ENCODE measurements at regions of chr9 and their contacts with region 1.

Region 1: GRCh38 chr9:78261403-78262001 is 25.6 kb downstream of the CEP78 start:
- DNase-seq: no peak
- ATAC-seq: peak; percentile 70 to 81 (median 78)
- H3K4me3 ChIP-seq: no peak overlapping the region
- H3K27ac ChIP-seq: no peak overlapping the region
- H3K4me1 ChIP-seq: peaks cover 5 to 15% (median 12%) of the 10 kb centered on the region in 3 donors
- H3K27me3 ChIP-seq: no peaks in the 10 kb centered on the region
- CTCF ChIP-seq: peak; percentile 27 to 59 (median 46)

Region 2: DNA sequence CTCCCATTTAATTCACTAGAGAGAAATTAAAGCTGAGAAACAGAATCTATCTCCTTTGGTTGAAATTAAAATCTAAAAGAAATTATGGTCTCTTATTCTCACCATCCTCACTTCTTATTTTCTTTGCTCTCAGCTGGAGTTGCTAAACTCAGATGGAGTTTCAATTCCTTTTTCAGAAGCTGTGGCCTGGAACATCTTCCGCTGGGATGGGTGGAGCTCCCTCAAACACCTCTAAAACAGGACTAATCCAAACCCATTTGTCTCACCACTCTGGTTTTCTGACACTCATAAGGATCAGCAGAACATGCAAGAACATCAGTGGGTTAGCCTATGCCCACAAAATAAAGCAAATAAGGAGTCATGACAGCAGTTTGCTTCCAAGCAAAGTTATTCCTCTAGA is 65.2 kb before region 1 on chr9:
- intact Hi-C with region 1: no loop called
- DNase-seq: no peak
- ATAC-seq: no peak
- H3K4me3 ChIP-seq: no peak overlapping the region
- H3K27ac ChIP-seq: no peak overlapping the region
- H3K4me1 ChIP-seq: no peaks in the 10 kb centered on the region
- H3K27me3 ChIP-seq: no peaks in the 10 kb centered on the region
- CTCF ChIP-seq: no peak

Region 3: DNA sequence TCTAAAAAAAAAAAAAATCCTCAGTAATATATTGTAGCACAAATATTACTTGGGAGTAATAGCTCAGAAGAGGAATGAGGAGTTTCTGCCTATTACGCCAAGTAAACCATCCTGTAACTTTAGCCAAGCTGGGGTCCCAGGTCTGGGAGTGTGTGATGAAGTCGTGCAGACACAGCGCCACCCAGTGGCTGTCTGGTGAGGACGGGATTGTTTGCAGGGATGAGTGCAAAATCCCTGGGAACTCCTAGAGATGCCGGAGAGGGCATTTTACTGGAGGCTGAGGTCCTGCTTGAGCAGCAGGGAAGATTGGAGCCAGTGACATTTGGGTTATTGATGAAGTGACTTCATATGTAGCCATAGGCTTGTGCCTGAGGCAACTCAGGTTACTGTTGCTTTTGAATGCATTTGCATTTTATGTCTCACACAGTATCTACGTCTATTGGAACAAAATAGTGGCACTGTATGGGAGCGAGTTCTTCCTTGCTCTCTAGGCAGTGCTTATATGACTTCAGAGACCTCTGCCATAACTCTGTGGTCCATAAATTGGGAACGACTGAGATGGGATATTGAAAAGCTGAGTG is 108.2 kb after region 1 on chr9:
- intact Hi-C with region 1: loop called in 2 of 3 experiments (anchors 5 to 10 kb)
- DNase-seq: peak; percentile 47 to 90 (median 70)
- ATAC-seq: peak; percentile 77 to 96 (median 90)
- H3K4me3 ChIP-seq: no peak overlapping the region
- H3K27ac ChIP-seq: no peak overlapping the region
- H3K4me1 ChIP-seq: no peaks in the 10 kb centered on the region
- H3K27me3 ChIP-seq: no peaks in the 10 kb centered on the region
- CTCF ChIP-seq: peak; percentile 74 to 83 (median 78)

Region 4: GRCh38 chr9:78383130-78383529 is 121.6 kb after region 1 on chr9:
- intact Hi-C with region 1: loop called in 2 of 3 experiments (anchors 5 to 10 kb)
- DNase-seq: no peak
- ATAC-seq: no peak
- H3K4me3 ChIP-seq: no peak overlapping the region
- H3K27ac ChIP-seq: no peak overlapping the region
- H3K4me1 ChIP-seq: no peaks in the 10 kb centered on the region
- H3K27me3 ChIP-seq: no peaks in the 10 kb centered on the region
- CTCF ChIP-seq: no peak

Region 5: GRCh38 chr9:78406933-78407332 is 145.4 kb after region 1 on chr9:
- intact Hi-C with region 1: no loop called
- DNase-seq: peak in 5 of 6 donors; percentile 42 to 77 (median 54)
- ATAC-seq: peak; percentile 95 to 100 (median 97)
- H3K4me3 ChIP-seq: no peak overlapping the region
- H3K27ac ChIP-seq: no peak overlapping the region
- H3K4me1 ChIP-seq: no peaks in the 10 kb centered on the region
- H3K27me3 ChIP-seq: no peaks in the 10 kb centered on the region
- CTCF ChIP-seq: no peak

Region 6: GRCh38 chr9:78439190-78439865 is 177.8 kb after region 1 on chr9:
- intact Hi-C with region 1: no loop called
- DNase-seq: peak; percentile 50 to 90 (median 77)
- ATAC-seq: peak; percentile 70 to 99 (median 94)
- H3K4me3 ChIP-seq: no peak overlapping the region
- H3K27ac ChIP-seq: no peak overlapping the region
- H3K4me1 ChIP-seq: no peaks in the 10 kb centered on the region
- H3K27me3 ChIP-seq: no peaks in the 10 kb centered on the region
- CTCF ChIP-seq: peak; percentile 89 to 98 (median 92)

Region 7: DNA sequence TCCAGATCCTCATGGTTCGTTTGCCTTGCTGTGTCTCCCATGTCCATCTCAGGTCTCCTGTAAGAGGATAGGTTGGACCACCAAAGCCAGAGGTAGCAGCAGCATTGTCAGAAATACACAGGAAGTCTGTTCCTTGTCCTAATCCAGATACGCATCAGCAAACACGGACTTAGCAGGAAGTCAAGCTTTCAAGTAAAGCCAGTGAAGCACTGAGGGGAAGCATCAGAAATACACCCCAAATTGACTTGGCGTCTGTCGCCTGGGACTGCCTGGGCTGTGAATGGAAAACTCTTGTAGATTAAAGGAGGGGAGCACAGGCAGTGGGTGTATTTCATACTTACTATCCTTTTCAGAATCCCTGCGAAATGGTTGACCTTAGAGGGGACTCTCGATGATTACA is 206.7 kb after region 1 on chr9:
- intact Hi-C with region 1: no loop called
- DNase-seq: no peak
- ATAC-seq: no peak
- H3K4me3 ChIP-seq: no peak overlapping the region
- H3K27ac ChIP-seq: no peak overlapping the region
- H3K4me1 ChIP-seq: no peaks in the 10 kb centered on the region
- H3K27me3 ChIP-seq: no peaks in the 10 kb centered on the region
- CTCF ChIP-seq: no peak